Heart left ventricle (tissue), 16 donors: ENCODE measurements at regions of chr1 and their contacts with region 1.

Region 1: DNA sequence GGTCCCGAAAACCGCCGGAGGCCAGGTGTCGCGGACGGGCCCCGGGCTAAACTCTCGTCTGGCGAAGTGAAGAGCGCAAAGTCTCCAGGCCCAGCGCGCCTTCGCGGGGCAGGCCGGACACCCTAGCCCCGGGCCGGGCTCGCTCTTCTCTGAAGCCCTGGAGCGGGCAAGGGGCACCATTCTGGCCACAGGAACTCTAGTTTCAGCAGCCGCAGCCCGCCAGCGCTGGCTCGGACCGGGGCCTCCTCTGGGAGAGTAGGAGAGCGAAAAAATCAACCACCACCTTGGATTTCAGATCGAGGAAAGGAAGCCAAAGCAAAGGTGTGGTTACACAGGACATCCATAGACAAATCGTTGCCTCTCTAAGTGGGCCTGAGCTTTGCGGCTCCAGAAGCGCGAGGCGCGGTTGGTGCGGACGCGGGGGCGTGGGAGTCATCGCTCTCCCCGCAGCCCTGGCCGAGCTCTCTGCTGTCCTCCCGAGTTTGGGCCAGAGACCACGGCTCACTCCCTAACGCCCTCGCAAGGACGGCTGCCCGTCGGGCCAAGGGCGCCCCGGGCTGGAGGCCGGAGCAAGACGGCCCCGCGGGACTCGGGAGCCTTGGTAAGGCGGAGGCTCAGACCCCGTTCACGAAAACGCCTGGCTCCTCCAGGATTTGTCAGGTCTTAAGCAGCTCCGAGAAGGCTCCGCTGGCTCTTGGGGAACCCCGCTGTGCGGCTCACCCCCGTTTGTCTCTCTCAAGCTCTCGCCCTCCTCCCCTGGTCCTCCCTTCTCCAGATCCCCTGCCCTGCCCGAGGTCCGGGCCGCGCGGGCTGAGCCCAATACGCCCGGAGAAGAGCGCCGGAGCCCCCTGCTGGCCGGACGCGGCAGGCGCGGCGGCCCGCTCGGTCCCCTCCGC is 132.9 kb upstream of the DPYD start:
- DNase-seq: peak; percentile 42 to 85 (median 56)
- ATAC-seq: peak; percentile 87 to 99 (median 96)
- H3K4me3 ChIP-seq: peak overlapping the region; percentile 15 to 65 (median 52)
- H3K27ac ChIP-seq: no peak overlapping the region
- H3K4me1 ChIP-seq: peaks cover 0 to 19% (median 11%) of the 10 kb centered on the region in 12 donors
- H3K27me3 ChIP-seq: peaks cover 5 to 72% (median 47%) of the 10 kb centered on the region in 9 donors
- CTCF ChIP-seq: peak; percentile 76 to 96 (median 92)
- POLR2A ChIP-seq: no peak

Region 2: GRCh38 chr1:96236156-96236739 is 1817.5 kb before region 1 on chr1:
- intact Hi-C with region 1: loop called in 2 of 10 experiments (anchors 10 kb)
- DNase-seq: no peak
- ATAC-seq: peak in 1 of 4 donors; percentile 49
- H3K4me3 ChIP-seq: no peak overlapping the region
- H3K27ac ChIP-seq: no peak overlapping the region
- H3K4me1 ChIP-seq: no peaks in the 10 kb centered on the region
- H3K27me3 ChIP-seq: peaks cover 0 to 4% (median 0%) of the 10 kb centered on the region in 9 donors
- CTCF ChIP-seq: peak in 11 of 12 donors; percentile 23 to 62 (median 48)
- POLR2A ChIP-seq: no peak

Region 3: GRCh38 chr1:96966536-96967138 is 1087.1 kb before region 1 on chr1:
- intact Hi-C with region 1: loop called (anchors 2 to 5 kb)
- DNase-seq: peak; percentile 53 to 79 (median 67)
- ATAC-seq: peak; percentile 68 to 83 (median 77)
- H3K4me3 ChIP-seq: peak overlapping the region in 2 of 12 donors; percentile 16 to 29
- H3K27ac ChIP-seq: no peak overlapping the region
- H3K4me1 ChIP-seq: peaks cover 0 to 6% (median 0%) of the 10 kb centered on the region in 12 donors
- H3K27me3 ChIP-seq: peaks cover 0 to 12% (median 0%) of the 10 kb centered on the region in 9 donors
- CTCF ChIP-seq: peak; percentile 82 to 96 (median 92)
- POLR2A ChIP-seq: no peak

Region 4: DNA sequence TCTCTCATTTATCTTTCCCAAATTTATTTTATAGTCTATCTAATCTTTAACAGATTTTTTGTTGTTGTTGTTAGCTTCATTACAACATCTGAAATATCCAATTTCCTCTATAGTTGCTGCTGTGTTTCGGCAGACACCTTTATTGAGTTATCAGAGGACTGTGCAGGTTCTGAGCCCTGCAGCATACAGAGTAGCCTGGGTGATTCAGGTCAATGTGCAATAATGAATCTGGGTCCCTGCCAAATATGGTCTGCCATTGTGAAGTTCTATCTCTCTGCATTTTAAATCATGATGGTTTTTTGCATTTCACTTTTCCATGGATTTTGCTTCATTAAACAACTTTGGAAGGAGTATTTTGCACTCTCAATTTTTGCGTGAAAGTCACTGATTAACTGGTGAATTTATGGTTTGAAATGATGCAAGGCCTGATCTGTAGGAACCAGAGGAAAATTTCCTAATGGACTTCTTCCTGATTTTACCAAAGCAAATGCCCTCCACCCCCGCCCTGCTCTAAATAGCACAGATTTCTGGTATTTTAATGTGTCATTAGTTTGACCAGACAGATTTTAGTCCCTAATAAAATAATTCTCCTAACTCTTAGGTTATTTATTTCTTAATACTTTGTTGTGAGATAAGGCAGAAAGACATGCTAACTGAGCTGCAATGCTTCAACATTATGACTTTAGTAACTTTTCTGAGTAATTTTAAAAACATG is 929.8 kb before region 1 on chr1:
- intact Hi-C with region 1: loop called in 1 of 10 experiments (anchors 10 kb)
- DNase-seq: no peak
- ATAC-seq: no peak
- H3K4me3 ChIP-seq: no peak overlapping the region
- H3K27ac ChIP-seq: no peak overlapping the region
- H3K4me1 ChIP-seq: no peaks in the 10 kb centered on the region
- H3K27me3 ChIP-seq: no peaks in the 10 kb centered on the region
- CTCF ChIP-seq: no peak
- POLR2A ChIP-seq: no peak

Region 5: DNA sequence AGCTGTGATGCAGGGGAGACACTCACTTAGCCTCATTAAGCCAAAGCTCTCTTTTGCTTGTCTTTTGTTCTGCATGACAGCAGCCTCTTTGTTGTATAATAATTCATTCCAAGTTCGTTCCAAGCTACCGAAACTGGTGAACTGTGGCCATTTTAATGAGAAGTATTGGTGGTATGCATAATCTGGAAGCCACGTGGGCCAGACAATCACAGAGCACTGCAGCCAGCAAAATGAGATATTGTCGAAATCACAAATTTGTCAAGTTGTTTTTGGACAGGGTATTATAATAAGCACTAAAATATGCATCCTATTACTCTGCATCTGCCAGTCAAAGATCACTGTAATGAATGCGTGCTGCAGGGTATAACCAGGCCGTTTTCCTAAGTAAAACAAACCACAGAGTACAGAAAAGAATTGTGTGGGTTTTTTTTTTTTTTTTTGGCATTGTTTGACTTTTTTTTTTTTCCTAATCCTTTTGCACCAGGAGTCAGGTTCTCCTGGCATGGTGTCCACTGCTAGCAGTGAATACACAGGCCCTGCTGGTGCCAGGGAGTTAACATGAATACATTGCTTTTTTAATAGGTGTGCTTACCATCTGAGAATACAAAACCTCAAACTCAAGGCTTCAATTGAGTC is 908.3 kb before region 1 on chr1:
- intact Hi-C with region 1: loop called in 1 of 10 experiments (anchors 10 kb)
- DNase-seq: no peak
- ATAC-seq: no peak
- H3K4me3 ChIP-seq: no peak overlapping the region
- H3K27ac ChIP-seq: no peak overlapping the region
- H3K4me1 ChIP-seq: peaks cover 0 to 3% (median 0%) of the 10 kb centered on the region in 12 donors
- H3K27me3 ChIP-seq: no peaks in the 10 kb centered on the region
- CTCF ChIP-seq: no peak
- POLR2A ChIP-seq: no peak

Region 6: DNA sequence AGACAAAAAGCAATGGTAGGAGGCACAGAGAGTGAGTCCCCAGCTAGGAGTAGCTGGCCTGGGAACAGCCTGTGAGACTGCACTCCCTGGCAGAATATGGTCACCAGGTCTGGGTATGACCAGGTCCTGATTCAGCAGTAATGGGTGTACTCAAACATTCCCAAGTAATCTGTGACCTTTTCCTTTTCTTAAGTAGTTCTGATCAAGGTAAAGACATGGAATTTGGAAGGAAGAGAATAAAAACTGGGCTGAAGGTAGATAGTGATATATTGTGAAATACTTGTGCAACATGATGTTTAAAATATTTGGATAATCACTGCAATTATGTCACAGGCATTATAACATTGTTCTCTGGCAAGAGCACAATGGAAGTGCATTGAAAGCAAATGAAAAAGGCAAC is 14.3 kb after region 1 on chr1:
- intact Hi-C with region 1: no loop called
- DNase-seq: no peak
- ATAC-seq: no peak
- H3K4me3 ChIP-seq: no peak overlapping the region
- H3K27ac ChIP-seq: no peak overlapping the region
- H3K4me1 ChIP-seq: no peaks in the 10 kb centered on the region
- H3K27me3 ChIP-seq: no peaks in the 10 kb centered on the region
- CTCF ChIP-seq: no peak
- POLR2A ChIP-seq: no peak

Region 7: DNA sequence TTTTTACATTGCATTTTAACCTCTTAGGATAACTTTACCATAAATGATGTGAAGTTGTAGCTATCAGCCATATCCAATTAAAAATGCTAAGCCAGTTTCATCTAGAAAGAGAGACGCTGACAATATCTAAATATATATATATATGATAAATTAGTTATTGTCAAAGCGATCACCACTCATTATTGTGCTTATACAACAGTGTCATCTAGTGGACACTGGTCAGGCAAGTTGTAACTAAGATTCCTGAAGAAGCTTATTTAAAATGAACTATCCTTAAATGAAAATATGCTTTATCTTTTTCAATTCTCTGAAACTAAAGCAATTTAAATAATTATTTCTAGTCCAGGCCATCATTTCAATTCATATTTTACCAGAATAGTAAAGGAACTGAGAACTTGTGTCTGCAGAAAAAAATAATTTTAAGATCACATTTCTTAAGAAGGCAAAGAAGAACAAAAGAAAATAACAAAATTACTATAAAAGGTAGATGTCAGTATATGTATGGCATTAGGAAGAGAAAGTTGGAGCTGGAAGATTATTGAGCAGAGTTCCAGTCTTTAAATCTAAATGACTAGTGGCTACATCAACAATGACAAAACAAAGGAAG is 414.5 kb after region 1 on chr1:
- intact Hi-C with region 1: loop called in 2 of 10 experiments (anchors 5 to 10 kb)
- DNase-seq: no peak
- ATAC-seq: no peak
- H3K4me3 ChIP-seq: no peak overlapping the region
- H3K27ac ChIP-seq: no peak overlapping the region
- H3K4me1 ChIP-seq: no peaks in the 10 kb centered on the region
- H3K27me3 ChIP-seq: no peaks in the 10 kb centered on the region
- CTCF ChIP-seq: peak; percentile 49 to 79 (median 72)
- POLR2A ChIP-seq: no peak